Calu3 (cell line): ENCODE measurements at regions of chrX and their contacts with region 1.

Region 1: GRCh38 chrX:40933132-40933705 is 152.0 kb upstream of the USP9X start:
- DNase-seq: no peak
- H3K4me3 Mint-ChIP-seq: peak overlapping the region; percentile 64
- H3K27ac Mint-ChIP-seq: peak overlapping the region; percentile 79
- H3K4me1 Mint-ChIP-seq: peaks cover 19% of the 10 kb centered on the region
- H3K27me3 Mint-ChIP-seq: no peaks in the 10 kb centered on the region
- CTCF ChIP-seq: no peak

Region 2: GRCh38 chrX:39725928-39726619 is 1207.1 kb before region 1 on chrX:
- CTCF ChIA-PET with region 1: no interaction called
- intact Hi-C with region 1: no loop called
- DNase-seq: no peak
- H3K4me3 Mint-ChIP-seq: no peak overlapping the region
- H3K27ac Mint-ChIP-seq: no peak overlapping the region
- H3K4me1 Mint-ChIP-seq: peaks cover 9% of the 10 kb centered on the region
- H3K27me3 Mint-ChIP-seq: peaks cover 28% of the 10 kb centered on the region
- CTCF ChIP-seq: no peak

Region 3: DNA sequence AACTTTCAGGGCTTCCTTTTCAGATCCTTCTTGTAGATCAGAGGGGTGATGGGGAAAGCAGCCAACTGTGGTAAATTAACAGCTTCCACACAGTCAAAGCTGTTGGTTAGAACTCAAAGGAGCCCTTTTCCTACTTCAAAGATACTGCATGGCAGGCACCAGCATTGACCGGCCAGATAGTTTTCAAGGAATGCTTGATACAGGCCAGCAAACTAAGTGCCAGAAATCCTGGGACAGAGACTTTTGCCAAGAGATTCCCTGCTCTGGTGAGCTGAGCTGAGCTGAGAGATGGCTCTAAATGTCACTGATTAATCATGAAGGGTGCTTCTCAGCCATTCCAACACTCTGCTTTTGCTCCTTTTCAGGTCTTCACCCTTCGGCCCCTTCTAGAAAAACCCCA is 66.3 kb before region 1 on chrX:
- CTCF ChIA-PET with region 1: no interaction called
- intact Hi-C with region 1: no loop called
- DNase-seq: no peak
- H3K4me3 Mint-ChIP-seq: no peak overlapping the region
- H3K27ac Mint-ChIP-seq: no peak overlapping the region
- H3K4me1 Mint-ChIP-seq: peaks cover 24% of the 10 kb centered on the region
- H3K27me3 Mint-ChIP-seq: no peaks in the 10 kb centered on the region
- CTCF ChIP-seq: no peak

Region 4: DNA sequence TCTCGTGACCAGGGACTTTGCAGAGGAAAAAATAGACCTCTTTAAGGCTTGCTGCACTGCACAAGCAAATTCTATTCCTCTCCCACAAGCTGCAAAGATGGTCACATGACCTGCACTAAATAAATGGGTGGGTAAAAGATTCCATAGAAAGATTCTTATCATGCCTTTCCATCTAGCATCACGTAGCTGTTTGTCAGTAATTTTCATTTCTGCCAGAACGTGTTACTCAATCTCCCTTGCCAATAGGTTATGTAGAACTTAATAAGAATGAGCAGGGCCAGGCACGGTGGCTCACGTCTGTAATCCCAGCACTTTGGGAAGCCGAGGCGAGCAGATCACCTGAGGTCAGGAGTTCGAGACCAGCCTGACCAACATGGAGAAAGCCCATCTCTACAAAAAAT is 94.2 kb after region 1 on chrX:
- CTCF ChIA-PET with region 1: no interaction called
- intact Hi-C with region 1: loop called (anchors 5 kb)
- DNase-seq: peak; percentile 38
- H3K4me3 Mint-ChIP-seq: no peak overlapping the region
- H3K27ac Mint-ChIP-seq: peak overlapping the region; percentile 65
- H3K4me1 Mint-ChIP-seq: no peaks in the 10 kb centered on the region
- H3K27me3 Mint-ChIP-seq: no peaks in the 10 kb centered on the region
- CTCF ChIP-seq: no peak